Activated CD4-positive, alpha-beta T cell treated with anti-CD3 and anti-CD28 coated beads for 36 hours (primary cell): ENCODE measurements at regions of chr1 and their contacts with region 1.

Region 1: DNA sequence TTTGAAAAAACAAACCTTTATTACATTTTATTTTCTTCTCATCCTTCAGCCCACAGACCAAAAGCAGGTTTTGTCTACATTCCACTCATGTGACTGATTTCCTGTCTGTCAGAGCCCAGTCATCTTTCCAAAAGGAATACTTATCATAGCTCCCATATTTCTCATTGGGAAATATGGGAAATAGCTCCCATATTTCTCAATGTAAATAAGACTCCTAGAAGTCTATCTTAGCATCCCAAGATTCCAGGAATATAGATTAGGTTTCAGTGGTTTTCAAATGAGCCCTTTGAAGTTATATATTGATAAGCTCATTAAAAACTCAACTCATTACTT is 19.1 kb upstream of the NRDC start:
- DNase-seq: no peak
- ATAC-seq: no peak
- H3K4me3 Mint-ChIP-seq: no peak overlapping the region
- H3K27ac Mint-ChIP-seq: no peak overlapping the region
- H3K4me1 Mint-ChIP-seq: no peaks in the 10 kb centered on the region
- H3K27me3 Mint-ChIP-seq: peaks cover 28% of the 10 kb centered on the region

Region 2: DNA sequence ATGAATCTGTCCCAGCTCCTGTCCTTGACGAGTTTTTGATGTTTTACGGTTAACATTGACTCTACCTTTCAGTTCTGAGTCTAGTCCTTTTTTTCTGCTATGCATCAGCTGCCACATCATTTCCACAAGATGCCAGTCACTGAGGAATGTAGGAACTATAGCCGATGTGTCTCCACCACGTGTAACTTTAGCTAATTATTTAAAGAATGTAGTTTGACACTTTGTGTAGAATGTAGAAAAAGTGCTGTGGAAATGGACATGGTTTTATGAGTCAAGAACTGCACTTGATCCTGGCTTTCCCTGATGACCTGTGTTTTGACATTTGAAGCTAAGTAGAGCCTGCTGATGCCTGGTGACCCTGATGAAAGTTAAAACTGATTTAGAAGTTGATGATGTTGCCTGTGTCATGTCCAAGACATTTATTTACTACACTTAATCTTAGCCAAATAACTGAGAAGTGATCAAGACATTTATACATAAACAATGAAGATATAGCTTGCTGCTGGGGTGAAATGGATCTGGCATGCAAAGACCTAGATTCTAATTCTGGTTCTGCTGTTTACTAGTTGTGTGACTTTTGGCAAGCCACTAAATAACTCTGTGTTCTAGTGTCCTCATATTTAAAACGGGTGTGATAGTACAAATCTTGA is 285.2 kb before region 1 on chr1:
- CTCF ChIA-PET with region 1: no interaction called
- POLR2A ChIA-PET with region 1: no interaction called
- intact Hi-C with region 1: no loop called
- DNase-seq: no peak
- ATAC-seq: no peak
- H3K4me3 Mint-ChIP-seq: no peak overlapping the region
- H3K27ac Mint-ChIP-seq: no peak overlapping the region
- H3K4me1 Mint-ChIP-seq: peaks cover 8% of the 10 kb centered on the region
- H3K27me3 Mint-ChIP-seq: peaks cover 2% of the 10 kb centered on the region

Region 3: DNA sequence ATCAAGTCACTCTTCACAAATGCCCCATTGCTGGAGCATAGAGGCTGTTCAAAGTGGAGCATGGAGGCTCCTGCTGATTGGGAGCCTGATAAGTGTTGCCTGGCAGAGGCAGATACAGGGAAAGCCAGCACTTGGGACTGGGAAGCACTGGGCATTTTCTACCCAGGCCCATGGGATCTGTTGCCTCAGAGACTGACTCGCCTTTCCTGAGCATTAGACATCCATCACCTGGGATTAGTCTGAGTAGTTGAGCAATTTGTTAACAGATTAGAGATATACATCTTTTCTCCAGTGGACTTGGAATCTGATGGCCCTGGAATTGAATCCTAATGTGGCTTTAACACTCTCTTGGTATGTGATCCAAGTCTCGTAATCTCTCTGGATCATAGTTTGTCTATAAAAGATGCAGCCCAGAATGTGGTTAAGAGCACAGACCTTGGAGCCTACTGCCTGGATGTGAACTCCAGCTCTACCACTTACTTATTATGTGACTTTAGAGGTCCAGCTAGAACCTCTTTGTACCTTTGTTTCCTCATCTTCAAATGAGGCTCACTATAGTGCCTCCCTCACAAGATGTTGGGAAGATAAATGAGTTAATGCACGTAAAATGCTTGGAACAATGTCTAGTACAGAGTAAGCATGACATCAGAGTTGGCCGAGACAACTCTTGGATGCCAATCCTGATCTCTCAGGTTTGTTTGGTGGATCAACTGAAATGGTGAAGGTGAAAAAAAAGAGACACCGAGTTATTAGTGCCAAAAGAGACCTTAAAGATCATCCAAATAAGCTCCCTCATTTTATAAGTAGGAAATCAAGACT is 19.1 kb after region 1 on chr1:
- CTCF ChIA-PET with region 1: interaction called, 15 read pairs
- POLR2A ChIA-PET with region 1: no interaction called
- intact Hi-C with region 1: no loop called
- DNase-seq: no peak
- ATAC-seq: no peak
- H3K4me3 Mint-ChIP-seq: no peak overlapping the region
- H3K27ac Mint-ChIP-seq: no peak overlapping the region
- H3K4me1 Mint-ChIP-seq: peaks cover 2% of the 10 kb centered on the region
- H3K27me3 Mint-ChIP-seq: peaks cover 9% of the 10 kb centered on the region

Region 4: DNA sequence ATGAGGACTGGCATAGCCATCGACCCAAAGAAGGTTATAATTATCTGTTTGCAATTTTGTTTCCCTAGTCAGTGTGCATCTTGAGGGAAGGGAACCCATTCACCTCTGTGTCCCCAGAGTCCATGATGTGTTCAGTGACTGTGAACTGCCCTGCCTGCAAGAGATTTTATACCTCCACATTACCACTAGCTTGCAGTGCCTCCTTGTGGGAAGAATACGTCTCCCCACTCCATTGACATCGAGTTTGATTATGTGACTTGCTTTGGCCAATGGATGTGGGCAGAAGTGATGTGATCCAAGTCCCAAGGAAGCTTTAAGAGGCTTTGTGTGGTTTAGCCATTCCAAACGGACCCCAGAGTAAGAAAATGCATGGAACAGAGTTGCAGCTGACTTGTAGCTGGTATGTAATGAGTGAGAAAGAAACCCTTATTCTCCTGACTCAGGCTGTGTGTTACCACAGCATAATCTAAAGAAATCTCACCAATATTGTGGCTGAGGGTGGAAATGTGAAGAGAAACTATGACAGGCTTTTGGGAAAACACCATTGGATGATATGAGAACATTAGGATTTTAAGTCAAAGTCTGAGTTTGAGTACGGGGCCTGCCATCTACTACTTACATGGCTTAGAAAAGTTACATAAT is 28.6 kb after region 1 on chr1:
- CTCF ChIA-PET with region 1: interaction called, 20 read pairs
- POLR2A ChIA-PET with region 1: interaction called, 4 read pairs
- intact Hi-C with region 1: no loop called
- DNase-seq: peak; percentile 18
- ATAC-seq: peak; percentile 44
- H3K4me3 Mint-ChIP-seq: no peak overlapping the region
- H3K27ac Mint-ChIP-seq: no peak overlapping the region
- H3K4me1 Mint-ChIP-seq: peaks cover 2% of the 10 kb centered on the region
- H3K27me3 Mint-ChIP-seq: peaks cover 4% of the 10 kb centered on the region

Region 5: DNA sequence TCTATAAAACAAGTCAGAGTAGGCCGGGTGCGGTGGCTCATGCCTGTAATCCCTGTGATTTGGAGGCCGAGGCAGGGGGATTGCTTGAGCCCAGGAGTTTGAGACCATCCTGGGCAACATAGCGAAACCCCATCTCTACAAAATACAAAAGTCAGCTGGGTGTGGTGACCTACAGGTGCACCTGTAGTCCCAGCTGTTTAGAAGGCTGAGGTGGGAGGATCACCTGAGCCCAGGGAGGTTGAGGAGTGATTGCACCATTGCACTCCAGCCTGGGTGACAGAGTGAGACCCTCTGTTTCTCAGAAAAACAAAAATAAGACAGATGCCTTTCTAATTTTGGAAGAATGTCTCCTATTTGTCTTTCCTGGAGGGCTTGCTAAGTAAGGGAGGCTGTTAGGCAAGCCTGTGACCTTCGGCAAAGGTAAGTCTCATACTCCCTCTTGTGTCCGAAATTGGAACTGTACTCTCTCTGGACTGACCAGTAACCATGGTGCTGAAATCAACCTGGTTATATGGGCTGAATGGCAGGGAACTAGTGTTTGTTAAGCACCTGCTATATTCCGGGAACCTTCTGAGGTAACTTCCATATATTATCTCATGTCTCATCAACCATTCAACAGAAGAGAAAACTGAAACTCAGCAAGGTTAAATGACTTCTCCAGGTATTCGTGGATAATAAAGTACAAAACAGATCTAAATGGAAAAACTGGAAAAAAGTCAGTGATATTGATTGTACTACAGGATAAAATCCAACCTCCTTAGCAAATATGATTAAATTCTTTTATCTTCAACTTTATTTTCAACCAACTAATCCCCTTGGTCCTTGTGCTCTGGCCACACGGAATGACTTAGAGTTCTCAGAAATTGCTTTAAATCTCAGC is 104.6 kb after region 1 on chr1:
- CTCF ChIA-PET with region 1: interaction called, 28 read pairs
- POLR2A ChIA-PET with region 1: no interaction called
- intact Hi-C with region 1: loop called (anchors 1 kb)
- DNase-seq: peak; percentile 52
- ATAC-seq: peak; percentile 95
- H3K4me3 Mint-ChIP-seq: no peak overlapping the region
- H3K27ac Mint-ChIP-seq: no peak overlapping the region
- H3K4me1 Mint-ChIP-seq: no peaks in the 10 kb centered on the region
- H3K27me3 Mint-ChIP-seq: peaks cover 14% of the 10 kb centered on the region

Region 6: DNA sequence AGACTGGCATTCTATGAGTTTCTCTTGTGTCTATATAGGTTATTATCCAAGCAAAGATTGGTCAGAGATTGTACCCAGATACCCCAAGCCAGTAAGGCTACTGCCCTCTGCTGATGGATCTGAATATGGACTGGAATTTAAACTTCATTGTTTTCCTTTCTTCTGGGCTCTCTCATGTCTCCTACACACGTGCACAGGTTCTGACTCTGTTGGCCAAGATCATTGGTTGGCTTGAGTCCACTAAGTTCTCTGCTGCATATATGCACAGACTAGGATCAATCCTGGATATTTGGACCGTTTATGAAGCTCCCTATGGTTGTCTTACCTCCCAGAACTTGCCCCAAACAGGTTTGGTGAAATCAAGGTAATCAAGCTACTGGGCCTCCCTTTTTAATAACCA is 398.7 kb after region 1 on chr1:
- CTCF ChIA-PET with region 1: interaction called, 3 read pairs
- POLR2A ChIA-PET with region 1: no interaction called
- intact Hi-C with region 1: loop called in 1 of 2 experiments (anchors 10 kb)
- DNase-seq: no peak
- ATAC-seq: peak; percentile 63
- H3K4me3 Mint-ChIP-seq: no peak overlapping the region
- H3K27ac Mint-ChIP-seq: no peak overlapping the region
- H3K4me1 Mint-ChIP-seq: no peaks in the 10 kb centered on the region
- H3K27me3 Mint-ChIP-seq: no peaks in the 10 kb centered on the region

Region 7: GRCh38 chr1:52683367-52683940 is 785.8 kb after region 1 on chr1:
- CTCF ChIA-PET with region 1: no interaction called
- POLR2A ChIA-PET with region 1: no interaction called
- intact Hi-C with region 1: loop called in 1 of 2 experiments (anchors 10 kb)
- DNase-seq: no peak
- ATAC-seq: peak; percentile 37
- H3K4me3 Mint-ChIP-seq: no peak overlapping the region
- H3K27ac Mint-ChIP-seq: no peak overlapping the region
- H3K4me1 Mint-ChIP-seq: peaks cover 8% of the 10 kb centered on the region
- H3K27me3 Mint-ChIP-seq: no peaks in the 10 kb centered on the region